Activated CD8-positive, alpha-beta T cell treated with anti-CD3 and anti-CD28 coated beads, Interleukin-2, amount 10 ng/mL, durations not matched to agents 7 days and 5 days (primary cell): ENCODE measurements at regions of chr12 and their contacts with region 1.

Region 1: GRCh38 chr12:120228291-120229070 is 27.6 kb upstream of the RPLP0 start:
- DNase-seq: peak; percentile 91
- ATAC-seq: peak; percentile 83
- H3K4me3 Mint-ChIP-seq: peak overlapping the region; percentile 40
- H3K27ac Mint-ChIP-seq: peak overlapping the region; percentile 85
- H3K4me1 Mint-ChIP-seq: peaks cover 90% of the 10 kb centered on the region
- H3K27me3 Mint-ChIP-seq: no peaks in the 10 kb centered on the region

Region 2: GRCh38 chr12:120156315-120157259 is 71.9 kb before region 1 on chr12:
- CTCF ChIA-PET with region 1: no interaction called
- POLR2A ChIA-PET with region 1: no interaction called
- DNase-seq: no peak
- ATAC-seq: no peak
- H3K4me3 Mint-ChIP-seq: no peak overlapping the region
- H3K27ac Mint-ChIP-seq: peak overlapping the region; percentile 57
- H3K4me1 Mint-ChIP-seq: peaks cover 16% of the 10 kb centered on the region
- H3K27me3 Mint-ChIP-seq: no peaks in the 10 kb centered on the region

Region 3: DNA sequence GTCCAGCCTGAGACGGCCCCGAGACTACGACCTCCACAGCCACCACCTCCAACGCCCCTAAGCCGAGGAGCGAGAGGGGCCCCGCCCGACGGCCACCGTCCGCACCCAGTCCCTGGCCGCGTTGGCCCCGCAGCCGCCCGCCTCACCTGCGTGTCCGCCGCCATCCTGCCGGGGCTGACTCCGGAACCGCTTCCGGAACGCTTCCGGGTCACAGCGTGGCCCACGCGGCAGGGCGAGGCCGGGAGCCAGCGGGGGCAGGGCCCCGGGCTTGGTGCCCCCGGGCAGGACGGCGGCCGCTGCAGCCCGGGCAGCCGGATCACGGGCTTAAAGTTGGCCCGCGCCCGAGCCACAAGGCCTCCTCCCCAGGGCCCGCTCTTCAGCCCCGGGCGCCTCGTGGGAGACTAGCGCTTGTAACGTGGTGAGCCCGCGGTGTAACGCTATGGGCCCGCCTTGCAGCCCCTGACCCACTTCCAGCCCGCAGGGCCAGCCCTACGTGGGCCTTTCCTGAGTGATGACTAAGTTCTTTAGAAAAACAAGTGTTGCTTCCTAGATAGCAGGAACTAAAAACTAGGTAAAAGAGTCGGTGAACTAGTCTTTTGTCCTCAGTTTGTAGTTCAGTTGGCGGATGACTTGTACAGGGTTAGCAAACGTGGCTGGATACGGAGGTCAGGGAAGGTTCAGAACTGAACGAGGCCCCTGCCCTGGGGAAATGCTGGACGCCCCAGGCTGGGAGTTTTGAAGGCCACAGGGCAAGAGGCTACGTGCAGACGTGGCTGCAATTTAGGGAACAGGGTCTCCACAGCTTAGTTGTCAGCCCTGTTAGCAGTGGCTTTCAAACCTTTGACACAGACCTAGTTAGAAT is 33.7 kb before region 1 on chr12 and contains the start of gene GCN1:
- CTCF ChIA-PET with region 1: interaction called, 98 read pairs
- POLR2A ChIA-PET with region 1: interaction called, 52 read pairs
- DNase-seq: peak; percentile 88
- ATAC-seq: peak; percentile 84
- H3K4me3 Mint-ChIP-seq: peak within 1 kb of the TSS; percentile 89
- H3K27ac Mint-ChIP-seq: peak within 1 kb of the TSS; percentile 93
- H3K4me1 Mint-ChIP-seq: peaks cover 57% of the 10 kb centered on the region
- H3K27me3 Mint-ChIP-seq: no peaks in the 10 kb centered on the region
- total RNA-seq, gene GCN1: 109 to 112 TPM

Region 4: GRCh38 chr12:120242275-120242799 is 13.9 kb after region 1 on chr12:
- CTCF ChIA-PET with region 1: interaction called, 922 read pairs
- POLR2A ChIA-PET with region 1: interaction called, 9 read pairs
- DNase-seq: no peak
- ATAC-seq: no peak
- H3K4me3 Mint-ChIP-seq: no peak overlapping the region
- H3K27ac Mint-ChIP-seq: no peak overlapping the region
- H3K4me1 Mint-ChIP-seq: peaks cover 40% of the 10 kb centered on the region
- H3K27me3 Mint-ChIP-seq: peaks cover 2% of the 10 kb centered on the region

Region 5: GRCh38 chr12:120286796-120287465 is 58.5 kb after region 1 on chr12:
- CTCF ChIA-PET with region 1: interaction called, 89 read pairs
- POLR2A ChIA-PET with region 1: interaction called, 329 read pairs
- DNase-seq: no peak
- ATAC-seq: no peak
- H3K4me3 Mint-ChIP-seq: no peak overlapping the region
- H3K27ac Mint-ChIP-seq: no peak overlapping the region
- H3K4me1 Mint-ChIP-seq: peaks cover 5% of the 10 kb centered on the region
- H3K27me3 Mint-ChIP-seq: peaks cover 8% of the 10 kb centered on the region

Region 6: DNA sequence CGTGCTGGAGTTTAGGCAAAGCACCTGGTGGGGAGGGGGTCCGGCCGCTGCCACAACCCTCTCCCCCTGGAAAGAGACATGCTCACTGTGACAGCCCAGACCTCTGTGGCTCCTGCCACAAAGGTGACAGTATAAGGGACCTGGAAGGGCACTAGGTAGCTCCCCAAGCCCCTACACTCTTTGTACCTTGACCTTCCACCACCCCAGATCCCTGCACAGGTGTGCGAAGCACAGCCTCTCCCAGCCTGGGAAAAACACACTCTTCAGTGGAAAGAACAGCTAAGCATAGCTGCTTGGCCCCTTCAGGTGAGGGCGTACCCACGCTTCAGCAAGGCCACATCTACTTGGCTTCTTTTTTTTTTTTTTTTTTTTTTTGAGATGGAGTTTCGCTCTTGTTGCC is 104.0 kb after region 1 on chr12:
- CTCF ChIA-PET with region 1: no interaction called
- POLR2A ChIA-PET with region 1: no interaction called
- DNase-seq: no peak
- ATAC-seq: no peak
- H3K4me3 Mint-ChIP-seq: no peak overlapping the region
- H3K27ac Mint-ChIP-seq: no peak overlapping the region
- H3K4me1 Mint-ChIP-seq: no peaks in the 10 kb centered on the region
- H3K27me3 Mint-ChIP-seq: peaks cover 3% of the 10 kb centered on the region